Heart right ventricle (tissue), 16 donors: ENCODE measurements at regions of chr1 and their contacts with region 1.

Region 1: DNA sequence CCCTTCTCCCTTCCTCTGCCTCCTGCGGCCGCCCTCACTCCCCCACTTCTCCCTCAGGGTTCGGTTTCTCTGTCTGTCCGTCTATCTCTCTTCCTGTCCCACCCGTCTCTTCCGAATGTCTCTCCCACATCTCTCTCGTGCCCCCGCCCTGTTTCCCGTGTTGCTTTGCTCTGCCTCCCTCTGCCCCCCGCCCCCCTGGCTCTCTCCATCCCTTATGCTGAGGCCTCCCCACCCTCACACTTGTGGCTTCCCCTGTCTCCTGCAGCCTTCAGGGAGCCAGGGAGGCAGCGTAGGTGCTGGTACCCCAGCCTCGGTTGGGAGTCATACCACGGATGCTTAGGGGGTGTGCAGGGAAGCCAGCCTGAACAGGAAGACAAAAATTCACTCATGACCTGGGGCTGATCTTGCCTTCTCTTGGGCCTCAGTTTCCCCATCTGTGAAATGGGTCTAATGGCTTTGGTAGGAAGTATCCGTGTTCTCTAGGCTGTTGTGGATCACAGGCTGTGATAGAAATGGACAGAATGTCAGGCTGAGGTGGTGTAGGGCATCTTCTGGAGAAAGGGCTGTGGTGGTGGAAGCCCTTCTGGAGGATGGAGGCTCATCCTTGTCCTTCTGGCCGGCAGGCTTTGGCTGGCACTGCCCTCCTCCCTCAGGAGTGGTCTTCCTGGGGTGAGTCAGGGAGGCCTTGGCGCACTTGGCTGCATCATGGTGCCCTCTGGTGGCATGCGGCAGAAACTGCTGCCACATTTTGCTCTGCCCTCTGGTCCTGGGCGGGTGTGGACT is 55.5 kb downstream of the FOXO6 start:
- DNase-seq: peak; percentile 48 to 69
- ATAC-seq: peak; percentile 50 to 73 (median 58)
- H3K4me3 ChIP-seq: no peak overlapping the region
- H3K27ac ChIP-seq: no peak overlapping the region
- H3K4me1 ChIP-seq: peaks cover 6 to 30% (median 15%) of the 10 kb centered on the region in 9 donors
- H3K27me3 ChIP-seq: no peaks in the 10 kb centered on the region
- CTCF ChIP-seq: peak; percentile 88 to 96 (median 92)

Region 2: DNA sequence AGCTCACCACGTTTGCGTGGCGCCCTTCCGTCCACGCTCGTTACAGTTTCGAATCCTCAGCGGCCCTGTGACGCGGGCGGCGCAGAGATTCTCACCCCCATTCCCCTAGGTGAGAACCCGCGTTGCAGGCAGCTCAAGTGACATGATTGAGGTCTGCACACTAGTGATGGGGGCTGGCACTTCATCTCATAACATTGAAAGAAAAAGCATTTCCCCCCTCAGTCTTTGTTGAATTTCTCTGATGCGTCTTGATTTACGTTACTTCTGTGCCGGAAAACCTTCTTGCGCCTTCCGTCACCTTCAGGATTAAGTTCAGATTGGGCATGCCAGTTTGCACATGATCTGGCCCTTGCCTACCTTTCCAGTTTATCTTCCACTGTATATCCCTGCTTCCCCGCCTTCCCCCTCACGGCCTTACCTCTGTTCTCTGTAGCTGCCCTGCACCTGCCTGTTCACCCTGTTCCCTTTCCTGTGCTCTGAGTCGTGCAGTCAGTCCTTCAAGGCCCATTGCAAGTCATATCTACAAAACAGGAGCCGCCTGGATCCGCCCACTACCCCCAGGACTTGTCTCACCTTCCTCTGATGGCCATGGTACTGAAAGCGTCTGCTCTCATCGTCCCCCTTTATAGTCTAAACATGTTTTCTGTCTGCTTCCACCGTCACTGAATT is 436.2 kb before region 1 on chr1:
- intact Hi-C with region 1: no loop called
- DNase-seq: peak in 1 of 2 donors; percentile 18
- ATAC-seq: no peak
- H3K4me3 ChIP-seq: peak overlapping the region in 9 of 10 donors; percentile 67 to 91 (median 72)
- H3K27ac ChIP-seq: peak overlapping the region; percentile 79 to 94 (median 89)
- H3K4me1 ChIP-seq: peaks cover 0 to 32% (median 20%) of the 10 kb centered on the region in 9 donors
- H3K27me3 ChIP-seq: no peaks in the 10 kb centered on the region
- CTCF ChIP-seq: no peak

Region 3: GRCh38 chr1:41268154-41268770 is 148.5 kb before region 1 on chr1:
- intact Hi-C with region 1: loop called in 9 of 10 experiments (anchors 1 to 5 kb)
- DNase-seq: peak; percentile 68 to 73
- ATAC-seq: peak; percentile 65 to 89 (median 84)
- H3K4me3 ChIP-seq: no peak overlapping the region
- H3K27ac ChIP-seq: no peak overlapping the region
- H3K4me1 ChIP-seq: peaks cover 0 to 5% (median 4%) of the 10 kb centered on the region in 9 donors
- H3K27me3 ChIP-seq: peaks cover 0 to 3% (median 0%) of the 10 kb centered on the region in 7 donors
- CTCF ChIP-seq: peak; percentile 96 to 100 (median 98)

Region 4: DNA sequence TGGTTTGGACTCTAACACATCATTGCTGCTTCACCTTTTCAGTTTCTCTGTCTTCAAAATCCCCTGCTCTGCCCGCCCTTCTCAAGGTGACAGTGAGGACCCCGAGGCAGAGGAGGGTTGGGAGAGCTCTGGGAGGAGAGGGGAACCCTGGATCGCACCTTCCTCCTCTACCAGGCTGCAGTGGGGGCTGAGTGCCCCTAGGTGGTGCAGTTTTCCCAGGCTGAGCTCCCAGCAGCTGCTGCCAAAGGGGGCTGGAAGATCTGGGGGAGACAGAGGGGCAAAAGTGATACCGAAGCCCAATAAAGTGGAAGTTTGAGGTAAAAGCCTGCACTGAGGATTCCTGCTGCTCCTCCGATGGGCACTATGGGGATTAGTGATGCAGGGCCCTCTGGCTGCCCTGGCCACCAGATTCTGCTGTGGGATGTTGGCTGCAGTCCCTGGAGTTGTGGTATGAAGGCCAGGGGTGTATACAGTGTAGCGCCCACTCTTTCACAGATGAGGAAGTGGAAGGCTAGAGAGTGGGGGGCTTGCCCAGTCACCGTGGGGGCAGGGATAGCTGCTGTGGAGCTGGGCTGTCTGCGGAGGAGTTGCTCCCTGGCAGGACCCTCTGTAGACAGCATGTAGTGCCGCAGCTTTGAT is 133.9 kb before region 1 on chr1:
- intact Hi-C with region 1: loop called in 6 of 10 experiments (anchors 2 to 5 kb)
- DNase-seq: peak; percentile 27 to 44
- ATAC-seq: peak; percentile 40 to 74 (median 65)
- H3K4me3 ChIP-seq: no peak overlapping the region
- H3K27ac ChIP-seq: no peak overlapping the region
- H3K4me1 ChIP-seq: peaks cover 0 to 9% (median 0%) of the 10 kb centered on the region in 9 donors
- H3K27me3 ChIP-seq: peaks cover 0 to 19% (median 5%) of the 10 kb centered on the region in 7 donors
- CTCF ChIP-seq: peak; percentile 47 to 85 (median 79)

Region 5: GRCh38 chr1:41322835-41323627 is 93.7 kb before region 1 on chr1:
- intact Hi-C with region 1: loop called (anchors 1 to 5 kb)
- DNase-seq: peak; percentile 27 to 38
- ATAC-seq: peak in 7 of 8 donors; percentile 65 to 77 (median 71)
- H3K4me3 ChIP-seq: no peak overlapping the region
- H3K27ac ChIP-seq: no peak overlapping the region
- H3K4me1 ChIP-seq: peaks cover 2 to 20% (median 12%) of the 10 kb centered on the region in 9 donors
- H3K27me3 ChIP-seq: no peaks in the 10 kb centered on the region
- CTCF ChIP-seq: peak; percentile 25 to 69 (median 49)

Region 6: GRCh38 chr1:41360993-41361753 is 55.6 kb before region 1 on chr1 and contains the start of gene FOXO6:
- intact Hi-C with region 1: loop called in 5 of 10 experiments (anchors 5 to 10 kb)
- DNase-seq: peak; percentile 98
- ATAC-seq: peak; percentile 90 to 98 (median 95)
- H3K4me3 ChIP-seq: peak within 1 kb of the TSS; percentile 52 to 82 (median 64)
- H3K27ac ChIP-seq: peak within 1 kb of the TSS in 6 of 10 donors; percentile 40 to 69 (median 57)
- H3K4me1 ChIP-seq: peaks cover 19 to 75% (median 44%) of the 10 kb centered on the region in 9 donors
- H3K27me3 ChIP-seq: peaks cover 0 to 57% (median 18%) of the 10 kb centered on the region in 7 donors
- CTCF ChIP-seq: peak; percentile 12 to 77 (median 60)
- total RNA-seq, gene FOXO6: 0.30 to 2.6 (median 1.4) TPM

Region 7: GRCh38 chr1:41366455-41367287 is 50.1 kb before region 1 on chr1:
- intact Hi-C with region 1: loop called in 5 of 10 experiments (anchors 5 to 10 kb)
- DNase-seq: no peak
- ATAC-seq: peak in 4 of 8 donors; percentile 8 to 29 (median 24)
- H3K4me3 ChIP-seq: peak overlapping the region; percentile 10 to 61 (median 49)
- H3K27ac ChIP-seq: peak overlapping the region in 8 of 10 donors; percentile 48 to 80 (median 64)
- H3K4me1 ChIP-seq: peaks cover 12 to 58% (median 34%) of the 10 kb centered on the region in 9 donors
- H3K27me3 ChIP-seq: peaks cover 0 to 73% (median 28%) of the 10 kb centered on the region in 7 donors
- CTCF ChIP-seq: no peak

Region 8: DNA sequence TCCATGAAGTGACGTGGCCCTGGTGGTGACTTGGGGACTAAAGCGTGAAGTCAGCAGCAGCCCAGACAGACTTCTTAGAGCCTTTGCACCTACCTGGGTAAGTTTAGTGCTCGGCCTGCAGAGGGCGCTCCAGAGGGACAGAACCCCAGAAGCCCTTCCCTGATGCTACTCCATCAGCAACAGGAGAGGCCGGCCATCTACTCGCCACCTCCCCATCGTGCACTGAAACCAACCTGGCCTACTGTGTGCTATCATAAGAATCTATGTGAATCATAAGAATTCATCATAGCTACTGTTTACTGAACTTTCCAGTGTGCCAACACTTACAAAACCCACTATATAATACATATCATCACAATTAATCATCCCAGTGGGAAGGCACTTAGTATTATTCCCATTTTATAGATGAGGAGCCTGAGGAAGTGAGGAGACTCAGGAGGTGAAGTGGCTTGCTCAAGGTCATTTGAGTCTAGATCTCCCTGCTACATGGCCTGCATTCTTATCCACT is 75.7 kb after region 1 on chr1:
- intact Hi-C with region 1: no loop called
- DNase-seq: no peak
- ATAC-seq: no peak
- H3K4me3 ChIP-seq: no peak overlapping the region
- H3K27ac ChIP-seq: no peak overlapping the region
- H3K4me1 ChIP-seq: peaks cover 9 to 42% (median 28%) of the 10 kb centered on the region in 9 donors
- H3K27me3 ChIP-seq: peaks cover 0 to 17% (median 0%) of the 10 kb centered on the region in 7 donors
- CTCF ChIP-seq: peak in 7 of 9 donors; percentile 28 to 51 (median 40)